ENCODE measurements at regions of chr4 and their contacts with region 1.

Region 1: GRCh38 chr4:105061136-105061696 is 85.5 kb upstream of the TET2 start:
- DNase-seq: peak; percentile 69
- H3K4me3 Mint-ChIP-seq: peak overlapping the region; percentile 31
- H3K27ac Mint-ChIP-seq: peak overlapping the region; percentile 91
- H3K4me1 Mint-ChIP-seq: peaks cover 57% of the 10 kb centered on the region
- H3K27me3 Mint-ChIP-seq: no peaks in the 10 kb centered on the region

Region 2: GRCh38 chr4:104938624-104939023 is 122.6 kb before region 1 on chr4:
- CTCF ChIA-PET with region 1: no interaction called
- intact Hi-C with region 1: loop called (anchors 1 kb)
- DNase-seq: peak; percentile 36
- H3K4me3 Mint-ChIP-seq: no peak overlapping the region
- H3K27ac Mint-ChIP-seq: no peak overlapping the region
- H3K4me1 Mint-ChIP-seq: peaks cover 5% of the 10 kb centered on the region
- H3K27me3 Mint-ChIP-seq: no peaks in the 10 kb centered on the region

Region 3: GRCh38 chr4:105140684-105141490 is 79.7 kb after region 1 on chr4:
- CTCF ChIA-PET with region 1: no interaction called
- intact Hi-C with region 1: loop called (anchors 1 kb)
- DNase-seq: peak; percentile 59
- H3K4me3 Mint-ChIP-seq: no peak overlapping the region
- H3K27ac Mint-ChIP-seq: no peak overlapping the region
- H3K4me1 Mint-ChIP-seq: peaks cover 28% of the 10 kb centered on the region
- H3K27me3 Mint-ChIP-seq: no peaks in the 10 kb centered on the region

Region 4: GRCh38 chr4:105215609-105216313 is 154.5 kb after region 1 on chr4:
- CTCF ChIA-PET with region 1: no interaction called
- intact Hi-C with region 1: loop called (anchors 1 kb)
- DNase-seq: no peak
- H3K4me3 Mint-ChIP-seq: peak overlapping the region; percentile 2
- H3K27ac Mint-ChIP-seq: peak overlapping the region; percentile 85
- H3K4me1 Mint-ChIP-seq: peaks cover 46% of the 10 kb centered on the region
- H3K27me3 Mint-ChIP-seq: no peaks in the 10 kb centered on the region

Region 5: DNA sequence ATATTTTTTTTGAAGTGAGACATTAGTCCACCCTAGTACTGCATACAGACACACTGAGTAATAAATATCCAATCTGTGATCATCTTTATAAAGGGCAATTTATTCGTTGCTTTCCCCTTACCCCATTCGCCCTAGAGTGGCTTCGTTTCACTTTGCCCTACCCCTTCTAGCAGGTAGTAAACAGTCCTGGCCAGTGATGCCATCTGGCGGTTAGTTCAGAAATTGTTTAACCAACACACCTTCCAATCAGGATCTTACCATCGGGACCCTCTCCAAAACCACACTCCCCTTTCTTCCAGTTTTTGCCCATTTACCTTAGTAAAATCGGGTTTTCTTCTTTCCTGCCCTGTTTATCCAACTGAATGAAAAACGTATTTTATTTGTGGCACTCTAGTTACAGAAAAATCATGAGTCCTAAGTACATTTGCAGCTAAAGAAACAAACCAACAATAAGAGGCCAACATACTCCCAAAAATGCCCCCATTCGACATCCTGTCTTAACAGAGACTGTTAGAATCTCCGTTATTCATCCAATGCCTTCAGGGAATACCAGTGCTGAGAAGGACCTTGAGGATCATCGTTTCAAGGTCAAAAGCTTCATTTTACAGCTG is 410.5 kb after region 1 on chr4:
- CTCF ChIA-PET with region 1: interaction called, 5 read pairs
- intact Hi-C with region 1: loop called (anchors 1 kb)
- DNase-seq: peak; percentile 88
- H3K4me3 Mint-ChIP-seq: peak overlapping the region; percentile 96
- H3K27ac Mint-ChIP-seq: peak overlapping the region; percentile 98
- H3K4me1 Mint-ChIP-seq: peaks cover 44% of the 10 kb centered on the region
- H3K27me3 Mint-ChIP-seq: no peaks in the 10 kb centered on the region